Ascending aorta (tissue), 2 donors: ENCODE measurements at regions of chr5 and their contacts with region 1.

Region 1: GRCh38 chr5:10283927-10284635 is 23.6 kb downstream of the CMBL start:
- DNase-seq: peak; percentile 16 to 89
- H3K4me3 ChIP-seq: no peak overlapping the region
- H3K27ac ChIP-seq: no peak overlapping the region
- H3K4me1 ChIP-seq: peaks cover 0 to 4% of the 10 kb centered on the region in 2 donors
- H3K27me3 ChIP-seq: no peaks in the 10 kb centered on the region
- CTCF ChIP-seq: peak; percentile 81 to 95 (median 94)

Region 2: DNA sequence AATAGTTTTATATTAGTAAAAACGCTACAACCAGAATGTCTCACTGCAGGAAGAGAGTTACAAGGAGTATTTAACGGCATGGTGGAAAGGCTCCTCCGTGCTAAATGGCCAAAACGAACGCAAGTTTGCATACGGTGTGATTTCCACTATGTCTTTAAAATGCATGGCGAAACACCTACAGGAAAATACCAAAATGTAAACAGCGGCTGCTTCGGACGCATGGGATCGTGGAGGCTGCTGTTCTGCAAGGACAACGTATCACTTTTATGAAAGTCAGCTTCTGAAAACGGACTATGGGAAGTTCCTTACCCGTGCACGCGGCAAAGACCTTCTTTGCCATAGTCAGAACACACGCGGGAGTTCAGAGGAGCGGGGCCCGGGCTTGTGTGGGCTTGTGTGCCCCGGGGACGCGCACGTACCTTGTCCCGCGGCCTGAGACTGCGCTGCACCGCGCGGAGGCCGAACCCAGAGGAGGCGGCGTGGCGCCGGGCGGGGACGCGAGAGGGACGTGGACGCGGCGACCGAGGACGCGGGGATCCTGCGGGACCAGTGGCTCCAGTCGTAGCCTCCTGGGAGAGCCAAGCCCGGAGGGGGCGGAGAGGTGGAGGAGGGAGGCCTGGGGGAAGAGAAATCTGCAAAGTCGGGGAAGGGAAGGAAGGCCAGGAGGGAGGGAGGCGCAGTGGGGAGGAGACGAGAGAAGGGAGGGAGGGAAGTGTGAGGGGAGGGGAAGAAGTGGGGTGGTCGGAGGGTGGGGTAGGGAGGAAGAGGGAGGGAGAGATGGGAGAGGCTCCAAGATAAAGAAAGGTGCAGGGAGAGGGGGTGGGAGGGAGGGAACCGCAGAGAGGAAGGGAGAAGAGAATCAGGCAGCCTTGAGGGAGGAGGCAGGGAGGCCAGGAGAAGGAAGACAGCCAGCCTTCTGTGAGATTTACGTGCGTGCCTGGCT is 23.4 kb after region 1 on chr5 and contains the start of gene CMBL:
- intact Hi-C with region 1: loop called (anchors 1 kb)
- DNase-seq: peak in 1 of 2 donors; percentile 74
- H3K4me3 ChIP-seq: peak within 1 kb of the TSS; percentile 75 to 93
- H3K27ac ChIP-seq: peak within 1 kb of the TSS; percentile 86 to 91
- H3K4me1 ChIP-seq: peaks cover 0 to 11% of the 10 kb centered on the region in 2 donors
- H3K27me3 ChIP-seq: no peaks in the 10 kb centered on the region
- CTCF ChIP-seq: no peak
- total RNA-seq, gene CMBL: 0.75 TPM

Region 3: GRCh38 chr5:10317825-10318682 is 34.0 kb after region 1 on chr5:
- intact Hi-C with region 1: no loop called
- DNase-seq: no peak
- H3K4me3 ChIP-seq: no peak overlapping the region
- H3K27ac ChIP-seq: no peak overlapping the region
- H3K4me1 ChIP-seq: no peaks in the 10 kb centered on the region
- H3K27me3 ChIP-seq: no peaks in the 10 kb centered on the region
- CTCF ChIP-seq: no peak

Region 4: DNA sequence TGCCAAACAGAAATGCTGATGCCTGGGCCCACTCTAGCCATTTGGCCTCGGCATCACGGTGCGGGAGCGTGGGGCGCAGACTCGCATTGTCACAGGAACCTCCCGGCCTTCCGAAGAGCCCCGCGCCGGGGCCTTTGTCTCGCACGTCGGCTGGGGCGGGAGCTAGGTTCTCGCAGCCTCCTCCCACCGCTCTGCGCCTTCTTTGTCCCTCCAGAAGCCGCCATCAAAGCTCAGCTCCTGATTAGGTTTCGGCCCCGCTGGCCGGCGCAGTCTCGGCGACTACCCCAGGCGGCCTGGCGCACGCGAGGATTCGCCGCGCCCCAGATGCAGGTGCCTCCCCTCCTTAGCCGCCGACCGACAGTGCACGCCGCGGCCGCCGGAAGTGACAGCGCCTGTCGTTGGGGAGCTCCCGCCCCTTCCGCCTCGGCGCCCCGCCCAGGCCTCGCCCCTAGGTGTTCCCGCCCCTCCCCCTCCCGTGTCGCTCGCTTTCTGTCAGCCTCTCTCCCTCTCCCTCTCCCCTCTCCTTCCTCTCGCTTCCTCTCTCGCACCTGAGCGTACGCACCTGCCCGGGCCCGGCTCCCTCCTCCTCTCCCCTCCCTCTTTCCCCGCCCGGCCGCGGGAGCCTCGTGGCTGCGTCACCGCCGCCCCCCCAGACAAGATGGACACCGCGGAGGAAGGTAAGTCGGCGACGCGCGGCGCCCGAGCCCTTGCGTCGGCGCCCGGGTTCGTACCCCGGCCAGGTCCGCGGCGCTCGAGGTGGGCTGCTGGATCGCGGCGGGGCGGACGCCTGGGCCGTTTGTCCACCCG is 69.4 kb after region 1 on chr5 and contains the start of gene MARCHF6:
- intact Hi-C with region 1: loop called (anchors 5 kb)
- DNase-seq: peak; percentile 79 to 96
- H3K4me3 ChIP-seq: peak within 1 kb of the TSS; percentile 83 to 84
- H3K27ac ChIP-seq: peak within 1 kb of the TSS; percentile 95 to 96
- H3K4me1 ChIP-seq: peaks cover 0 to 15% of the 10 kb centered on the region in 2 donors
- H3K27me3 ChIP-seq: no peaks in the 10 kb centered on the region
- CTCF ChIP-seq: peak in 1 of 3 experiments; percentile 8
- total RNA-seq, gene MARCHF6: 47.0 TPM

Region 5: DNA sequence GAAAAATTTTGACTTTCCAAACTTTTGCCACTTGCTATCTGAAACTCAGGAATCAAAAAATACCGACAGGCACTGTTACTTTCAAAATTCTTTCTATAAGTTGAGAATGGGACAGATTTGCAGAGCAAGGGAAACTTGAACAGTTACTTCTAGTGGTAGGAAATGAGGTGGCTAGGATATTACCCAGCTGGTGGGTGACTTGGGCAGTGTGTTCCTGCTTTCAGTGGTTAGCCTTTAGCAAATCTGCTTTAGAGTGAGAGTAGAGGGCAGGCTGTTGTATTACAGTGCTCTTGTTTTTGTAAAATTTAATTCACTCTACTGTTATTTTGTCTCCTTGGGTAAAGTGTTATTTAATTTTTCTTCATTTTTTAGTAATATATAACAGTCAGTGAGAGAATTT is 117.4 kb after region 1 on chr5:
- intact Hi-C with region 1: loop called (anchors 5 kb)
- DNase-seq: no peak
- H3K4me3 ChIP-seq: no peak overlapping the region
- H3K27ac ChIP-seq: peak overlapping the region; percentile 35 to 43
- H3K4me1 ChIP-seq: peaks cover 0 to 14% of the 10 kb centered on the region in 2 donors
- H3K27me3 ChIP-seq: no peaks in the 10 kb centered on the region
- CTCF ChIP-seq: no peak

Region 6: DNA sequence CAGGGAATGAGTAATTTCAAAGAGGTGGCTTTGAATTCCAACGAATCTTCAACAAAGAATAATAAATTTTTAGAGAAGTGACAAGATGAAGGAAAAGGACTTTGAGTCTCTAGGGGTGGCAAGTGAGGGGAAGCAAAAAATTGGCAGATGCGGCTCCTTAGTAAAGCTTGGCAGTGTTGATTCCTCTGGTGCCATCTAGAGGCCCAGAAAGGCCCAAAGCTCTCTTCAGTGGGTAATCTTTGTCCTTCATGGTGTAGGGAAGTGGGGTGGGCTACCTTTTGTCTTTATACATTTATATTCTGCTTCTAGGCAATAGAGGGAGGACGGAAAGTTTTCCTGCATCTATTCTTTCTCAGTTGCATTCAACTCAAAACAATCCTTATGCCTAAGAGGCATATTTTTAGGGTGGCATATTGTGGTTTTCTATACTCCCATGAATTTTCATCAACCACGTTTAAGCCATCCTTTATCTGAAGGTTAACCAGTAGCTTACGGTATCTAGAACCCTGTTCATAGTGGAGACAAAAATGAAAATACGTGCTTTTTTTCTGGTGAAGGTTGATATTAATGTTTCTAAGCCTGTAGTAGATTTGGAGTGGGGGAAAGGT is 140.1 kb after region 1 on chr5:
- intact Hi-C with region 1: loop called (anchors 1 kb)
- DNase-seq: no peak
- H3K4me3 ChIP-seq: no peak overlapping the region
- H3K27ac ChIP-seq: no peak overlapping the region
- H3K4me1 ChIP-seq: no peaks in the 10 kb centered on the region
- H3K27me3 ChIP-seq: no peaks in the 10 kb centered on the region
- CTCF ChIP-seq: peak in 2 of 3 experiments; percentile 31 to 50

Region 7: DNA sequence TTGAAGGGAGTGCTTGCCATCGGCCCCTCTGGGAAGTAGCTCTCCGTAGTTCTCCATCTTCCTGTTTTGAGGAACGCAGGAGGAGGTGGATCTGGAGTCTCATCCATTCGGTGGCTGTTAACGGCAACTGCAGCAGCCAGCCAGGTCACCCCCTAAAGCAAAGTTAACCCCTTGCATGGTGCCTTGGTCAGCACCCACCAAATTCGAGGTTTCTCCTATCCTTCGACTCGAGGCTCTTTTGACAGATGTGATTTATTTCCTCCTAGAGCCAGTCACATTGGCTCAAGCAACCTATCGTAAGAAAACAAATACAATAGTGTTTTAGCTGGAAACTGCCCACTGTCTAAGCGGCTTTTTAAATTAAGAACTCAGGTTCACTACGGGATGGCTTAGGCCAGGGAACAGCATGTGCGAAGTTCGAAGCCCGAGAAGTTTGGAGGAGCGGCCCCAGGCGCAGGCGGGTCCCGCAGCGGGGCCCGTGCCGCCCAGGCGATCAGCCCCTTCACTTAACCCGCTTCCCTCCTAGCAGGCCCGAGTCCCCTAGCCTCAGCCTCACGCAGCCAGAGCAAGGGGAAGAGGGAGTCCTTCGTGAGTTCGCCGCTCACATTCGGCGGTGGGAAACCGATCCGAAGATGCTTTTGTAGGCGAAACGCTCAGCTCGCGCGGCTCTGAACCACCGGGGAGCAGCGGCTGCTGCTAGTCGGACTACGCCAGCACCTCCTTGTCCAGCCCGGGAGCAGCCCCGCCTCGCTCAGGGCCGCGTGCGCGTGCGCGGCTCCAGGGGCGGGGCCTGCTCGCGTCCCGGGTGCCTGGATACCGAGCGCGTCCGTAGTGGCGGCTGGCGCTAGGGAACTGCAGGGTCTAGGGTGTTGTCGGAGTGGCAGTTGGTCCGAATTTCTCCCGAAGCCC is 157.3 kb after region 1 on chr5 and contains the start of gene ROPN1L:
- intact Hi-C with region 1: loop called (anchors 5 kb)
- DNase-seq: peak; percentile 52 to 93
- H3K4me3 ChIP-seq: peak within 1 kb of the TSS; percentile 54 to 78
- H3K27ac ChIP-seq: peak within 1 kb of the TSS; percentile 47 to 54
- H3K4me1 ChIP-seq: peaks cover 3% of the 10 kb centered on the region in 2 donors
- H3K27me3 ChIP-seq: no peaks in the 10 kb centered on the region
- CTCF ChIP-seq: no peak
- total RNA-seq, gene ROPN1L: not detected

Region 8: DNA sequence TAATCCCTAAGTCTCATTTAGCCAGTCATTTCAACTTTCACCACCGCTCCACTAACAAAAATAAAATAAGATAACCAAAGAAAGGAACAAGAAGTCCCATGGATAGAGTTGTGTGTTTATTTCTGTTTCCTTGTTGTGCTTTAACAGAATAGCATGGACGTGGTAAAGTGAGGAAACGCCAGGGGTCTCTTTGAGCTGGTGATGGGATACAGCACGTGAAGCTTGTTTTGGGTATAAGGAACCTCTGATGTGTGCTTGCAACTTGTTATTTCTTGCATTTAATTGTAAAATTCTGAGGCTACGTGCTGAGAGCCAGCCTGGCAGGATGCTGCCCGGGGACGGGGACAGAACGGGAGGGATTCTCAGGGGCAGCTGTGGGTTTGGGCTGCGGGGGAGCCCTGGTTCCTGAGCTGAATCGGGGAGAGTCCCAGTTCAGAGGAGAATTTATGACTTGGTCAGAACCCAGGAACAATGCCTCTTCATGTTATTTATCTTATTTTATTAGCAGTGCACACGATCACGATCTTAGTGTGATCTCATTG is 343.1 kb after region 1 on chr5:
- intact Hi-C with region 1: loop called (anchors 2 kb)
- DNase-seq: no peak
- H3K4me3 ChIP-seq: peak overlapping the region; percentile 33 to 63
- H3K27ac ChIP-seq: peak overlapping the region; percentile 70 to 89
- H3K4me1 ChIP-seq: peaks cover 0 to 12% of the 10 kb centered on the region in 2 donors
- H3K27me3 ChIP-seq: no peaks in the 10 kb centered on the region
- CTCF ChIP-seq: no peak